Sciatic nerve (tissue), 2 donors: ENCODE measurements at regions of chr1 and their contacts with region 1.

Region 1: GRCh38 chr1:85756864-85757263 is 48.6 kb upstream of the ZNHIT6 start:
- DNase-seq: no peak
- ATAC-seq: no peak

Region 2: GRCh38 chr1:85707990-85708828 is 48.7 kb before region 1 on chr1 and contains the start of gene ZNHIT6:
- intact Hi-C with region 1: no loop called
- DNase-seq: peak; percentile 90
- ATAC-seq: peak; percentile 98
- total RNA-seq, gene ZNHIT6: 26.3 TPM

Region 3: GRCh38 chr1:85801520-85801919 is 44.7 kb after region 1 on chr1:
- intact Hi-C with region 1: loop called (anchors 1 kb)
- DNase-seq: no peak
- ATAC-seq: no peak